Left colon (tissue), 2 donors: ENCODE measurements at regions of chr5 and their contacts with region 1.

Region 1: GRCh38 chr5:171207256-171207847 is 101.7 kb upstream of the TLX3 start:
- DNase-seq: no peak
- ATAC-seq: no peak

Region 2: DNA sequence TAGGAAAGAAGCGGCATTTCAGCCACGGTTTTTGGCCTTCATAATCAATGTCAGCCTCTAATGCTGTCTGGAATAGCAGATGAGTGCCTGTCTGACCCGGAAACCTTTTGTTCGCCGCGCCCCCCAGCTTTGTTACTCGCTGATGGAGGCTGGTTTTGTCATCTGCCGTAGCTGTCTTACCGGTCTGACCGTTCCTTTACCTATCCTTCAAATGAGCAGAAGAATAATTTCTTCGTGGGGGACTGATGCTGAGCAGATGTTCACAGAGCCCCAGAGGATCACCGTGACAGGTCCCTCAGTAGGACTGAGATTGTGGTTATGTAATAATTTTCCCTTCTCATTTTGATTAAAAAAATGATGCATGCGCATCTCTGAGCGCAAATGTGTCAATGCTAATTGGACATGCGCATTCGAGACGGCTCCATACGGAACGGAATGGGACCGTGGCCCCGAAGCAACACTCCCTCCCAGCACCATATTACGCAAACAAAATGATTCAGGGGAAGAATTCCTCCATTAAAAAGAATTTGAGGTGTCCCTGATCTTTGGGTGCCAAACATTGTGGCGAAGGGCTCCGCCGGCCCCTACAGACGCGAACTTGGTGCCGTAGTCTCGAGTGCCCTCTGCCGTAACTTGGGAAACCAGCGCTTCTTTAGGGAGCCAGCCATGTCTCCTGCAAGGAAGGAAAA is 129.3 kb after region 1 on chr5:
- intact Hi-C with region 1: loop called in 1 of 2 experiments (anchors 10 kb)
- DNase-seq: peak; percentile 29 to 37
- ATAC-seq: peak; percentile 71